ENCODE measurements at regions of chr10 and their contacts with region 1.

Region 1: GRCh38 chr10:97278491-97278989 is 13.9 kb downstream of the ARHGAP19 start:
- DNase-seq: no peak
- H3K4me3 ChIP-seq: no peak overlapping the region
- H3K27ac ChIP-seq: peak overlapping the region in 1 of 2 donors; percentile 14
- H3K4me1 ChIP-seq: peaks cover 0 to 26% (median 20%) of the 10 kb centered on the region in 4 donors
- H3K27me3 ChIP-seq: no peaks in the 10 kb centered on the region
- CTCF ChIP-seq: peak; percentile 55 to 73

Region 2: GRCh38 chr10:97072851-97073665 is 205.5 kb before region 1 on chr10:
- intact Hi-C with region 1: no loop called
- DNase-seq: peak; percentile 79 to 85
- H3K4me3 ChIP-seq: no peak overlapping the region
- H3K27ac ChIP-seq: no peak overlapping the region
- H3K4me1 ChIP-seq: no peaks in the 10 kb centered on the region
- H3K27me3 ChIP-seq: peaks cover 0 to 89% of the 10 kb centered on the region in 2 donors
- CTCF ChIP-seq: peak; percentile 76 to 94

Region 3: DNA sequence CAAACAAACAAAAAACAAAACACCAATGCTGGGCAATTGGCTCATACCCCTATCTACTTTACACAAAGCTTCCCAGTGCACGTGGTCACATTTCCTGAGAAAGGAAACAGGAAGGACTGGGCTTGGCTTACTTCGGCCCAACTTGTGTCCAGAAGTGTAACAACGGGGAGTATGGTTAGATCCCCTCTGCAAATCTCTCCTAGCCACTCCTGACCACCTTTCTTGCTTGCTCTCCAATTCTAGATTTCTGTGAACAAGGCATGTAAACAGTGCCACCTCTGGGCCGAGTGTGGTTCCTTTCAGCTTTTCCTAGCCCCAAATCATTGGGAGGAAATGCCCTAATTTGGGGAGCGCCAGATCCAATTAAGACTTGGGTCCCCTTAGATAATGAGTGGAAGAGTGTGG is 77.0 kb after region 1 on chr10:
- intact Hi-C with region 1: loop called (anchors 10 kb)
- DNase-seq: peak in 1 of 2 donors; percentile 42
- H3K4me3 ChIP-seq: no peak overlapping the region
- H3K27ac ChIP-seq: no peak overlapping the region
- H3K4me1 ChIP-seq: no peaks in the 10 kb centered on the region
- H3K27me3 ChIP-seq: no peaks in the 10 kb centered on the region
- CTCF ChIP-seq: peak; percentile 38 to 48

Measured in tibial artery (tissue), 4 donors.